PC-3 (cell line): ENCODE measurements at regions of chr19 and their contacts with region 1.

Region 1: DNA sequence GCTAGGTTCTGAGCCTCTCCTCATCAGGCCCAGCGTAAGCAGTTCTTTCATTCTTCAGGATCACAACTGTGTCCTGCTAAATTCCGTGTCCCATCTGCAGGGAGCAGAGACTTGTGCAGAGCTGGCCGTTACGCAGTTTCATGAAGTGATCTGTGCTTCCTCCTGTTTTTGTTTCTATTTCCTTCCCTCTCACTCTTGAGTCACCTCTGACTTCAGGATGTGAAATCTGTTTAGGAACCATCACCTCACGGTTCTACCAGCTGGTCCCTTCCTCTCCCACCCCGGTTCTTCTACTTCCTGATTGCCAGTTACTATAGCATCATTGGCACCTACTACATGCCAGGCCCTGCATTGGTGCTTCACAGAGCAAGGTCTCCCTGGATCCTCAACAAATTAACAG is 8.5 kb downstream of the MAU2 start:
- DNase-seq: no peak
- ATAC-seq: peak; percentile 15; the same call in 1 of the 2 replicates
- H3K4me3 ChIP-seq: no peak overlapping the region
- H3K27ac ChIP-seq: no peak overlapping the region
- H3K4me1 ChIP-seq: no peaks in the 10 kb centered on the region
- H3K27me3 ChIP-seq: no peaks in the 10 kb centered on the region
- CTCF ChIP-seq: no peak

Region 2: GRCh38 chr19:19214892-19215291 is 114.2 kb before region 1 on chr19:
- CTCF ChIA-PET with region 1: no interaction called
- POLR2A ChIA-PET with region 1: no interaction called
- intact Hi-C with region 1: no loop called
- DNase-seq: peak; percentile 42
- ATAC-seq: peak; percentile 46; the same call in 1 of the 2 replicates
- H3K4me3 ChIP-seq: no peak overlapping the region
- H3K27ac ChIP-seq: no peak overlapping the region
- H3K4me1 ChIP-seq: no peaks in the 10 kb centered on the region
- H3K27me3 ChIP-seq: peaks cover 8% of the 10 kb centered on the region
- CTCF ChIP-seq: no peak

Region 3: DNA sequence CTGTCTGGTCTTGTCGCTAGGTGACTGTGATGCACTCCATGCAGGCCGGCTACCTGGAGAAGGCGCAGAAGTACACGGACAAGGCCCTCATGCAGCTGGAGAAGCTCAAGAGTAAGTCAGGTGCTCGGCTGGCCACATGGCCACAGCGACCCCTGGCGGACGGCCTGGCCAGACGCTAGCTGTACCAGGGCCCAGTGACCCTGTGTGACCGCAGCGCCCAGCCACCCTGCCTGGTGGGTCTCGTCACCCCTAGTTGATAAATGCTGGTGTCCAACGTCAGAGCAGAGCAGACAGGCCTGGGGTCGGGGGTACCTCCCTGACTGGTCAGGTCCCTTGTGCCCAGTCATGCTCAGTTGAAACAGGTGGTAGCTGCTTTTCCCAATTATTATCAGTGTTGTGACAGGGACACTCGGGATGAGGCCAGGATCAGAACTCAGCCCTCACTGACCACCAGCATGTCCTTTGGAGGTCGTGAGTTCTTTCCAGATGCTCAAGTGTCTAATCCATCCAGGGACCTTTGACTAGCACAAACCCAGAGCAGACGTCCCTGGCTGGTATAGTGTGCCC is 13.7 kb after region 1 on chr19:
- CTCF ChIA-PET with region 1: no interaction called
- POLR2A ChIA-PET with region 1: no interaction called
- intact Hi-C with region 1: no loop called
- DNase-seq: peak; percentile 64
- ATAC-seq: peak; percentile 91
- H3K4me3 ChIP-seq: no peak overlapping the region
- H3K27ac ChIP-seq: no peak overlapping the region
- H3K4me1 ChIP-seq: no peaks in the 10 kb centered on the region
- H3K27me3 ChIP-seq: no peaks in the 10 kb centered on the region
- CTCF ChIP-seq: peak; percentile 90

Region 4: GRCh38 chr19:19404879-19405860 is 76.0 kb after region 1 on chr19 and contains the start of gene GATAD2A:
- CTCF ChIA-PET with region 1: no interaction called
- POLR2A ChIA-PET with region 1: no interaction called
- intact Hi-C with region 1: no loop called
- DNase-seq: peak; percentile 95
- ATAC-seq: peak; percentile 76
- H3K4me3 ChIP-seq: peak within 1 kb of the TSS; percentile 85
- H3K27ac ChIP-seq: peak within 1 kb of the TSS; percentile 85
- H3K4me1 ChIP-seq: peaks cover 51% of the 10 kb centered on the region
- H3K27me3 ChIP-seq: no peaks in the 10 kb centered on the region
- CTCF ChIP-seq: peak; percentile 33; the same call in 1 of the 2 replicates
- total RNA-seq, gene GATAD2A: 104 and 143 TPM in 2 replicates

Region 5: GRCh38 chr19:19568802-19569756 is 240.0 kb after region 1 on chr19:
- CTCF ChIA-PET with region 1: no interaction called
- POLR2A ChIA-PET with region 1: interaction called, 17 read pairs
- intact Hi-C with region 1: no loop called
- DNase-seq: peak; percentile 46
- ATAC-seq: peak; percentile 58
- H3K4me3 ChIP-seq: no peak overlapping the region
- H3K27ac ChIP-seq: no peak overlapping the region
- H3K4me1 ChIP-seq: no peaks in the 10 kb centered on the region
- H3K27me3 ChIP-seq: no peaks in the 10 kb centered on the region
- CTCF ChIP-seq: no peak